Right ventricle myocardium superior (tissue), 1 donor: ENCODE measurements at regions of chr9 and their contacts with region 1.

Region 1: GRCh38 chr9:121992571-121993212 is 100.4 kb downstream of the TTLL11 start:
- DNase-seq: peak; percentile 71
- ATAC-seq: peak; percentile 85

Region 2: DNA sequence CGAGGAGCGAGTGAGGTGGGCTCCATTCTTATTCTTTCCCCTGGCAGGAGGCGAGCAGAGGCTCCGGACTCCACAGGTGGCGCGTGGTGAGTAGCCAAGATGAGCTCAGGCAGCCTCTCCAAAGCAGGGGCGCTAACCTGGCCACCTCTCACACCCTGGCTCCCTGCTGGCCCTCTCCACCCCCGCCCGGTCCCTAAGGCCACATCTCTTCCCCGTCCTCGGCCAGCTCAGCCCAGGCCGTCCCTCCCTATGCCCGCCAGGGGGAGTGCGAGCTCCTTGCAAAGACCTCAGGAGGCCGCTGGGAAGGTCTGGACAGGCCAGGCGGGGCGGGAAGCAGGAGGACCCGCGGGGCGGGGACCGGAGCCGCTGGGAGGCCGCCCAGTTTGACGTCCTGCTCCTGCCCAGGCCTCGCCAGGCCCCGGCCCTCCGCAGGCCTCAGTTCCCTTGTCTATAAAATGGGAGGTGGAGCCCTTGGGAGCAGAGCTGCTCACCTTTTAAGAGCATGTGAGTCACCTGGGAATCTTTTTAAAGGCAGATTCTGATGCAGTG is 446.7 kb before region 1 on chr9:
- intact Hi-C with region 1: loop called (anchors 5 kb)
- DNase-seq: peak; percentile 98
- ATAC-seq: peak; percentile 87

Region 3: GRCh38 chr9:121634329-121635261 is 358.1 kb before region 1 on chr9:
- intact Hi-C with region 1: loop called (anchors 5 kb)
- DNase-seq: no peak
- ATAC-seq: peak; percentile 64

Region 4: GRCh38 chr9:121692606-121693387 is 299.9 kb before region 1 on chr9:
- intact Hi-C with region 1: loop called (anchors 5 kb)
- DNase-seq: no peak
- ATAC-seq: peak; percentile 58

Region 5: GRCh38 chr9:121750715-121751623 is 241.7 kb before region 1 on chr9:
- intact Hi-C with region 1: loop called (anchors 10 kb)
- DNase-seq: no peak
- ATAC-seq: no peak

Region 6: DNA sequence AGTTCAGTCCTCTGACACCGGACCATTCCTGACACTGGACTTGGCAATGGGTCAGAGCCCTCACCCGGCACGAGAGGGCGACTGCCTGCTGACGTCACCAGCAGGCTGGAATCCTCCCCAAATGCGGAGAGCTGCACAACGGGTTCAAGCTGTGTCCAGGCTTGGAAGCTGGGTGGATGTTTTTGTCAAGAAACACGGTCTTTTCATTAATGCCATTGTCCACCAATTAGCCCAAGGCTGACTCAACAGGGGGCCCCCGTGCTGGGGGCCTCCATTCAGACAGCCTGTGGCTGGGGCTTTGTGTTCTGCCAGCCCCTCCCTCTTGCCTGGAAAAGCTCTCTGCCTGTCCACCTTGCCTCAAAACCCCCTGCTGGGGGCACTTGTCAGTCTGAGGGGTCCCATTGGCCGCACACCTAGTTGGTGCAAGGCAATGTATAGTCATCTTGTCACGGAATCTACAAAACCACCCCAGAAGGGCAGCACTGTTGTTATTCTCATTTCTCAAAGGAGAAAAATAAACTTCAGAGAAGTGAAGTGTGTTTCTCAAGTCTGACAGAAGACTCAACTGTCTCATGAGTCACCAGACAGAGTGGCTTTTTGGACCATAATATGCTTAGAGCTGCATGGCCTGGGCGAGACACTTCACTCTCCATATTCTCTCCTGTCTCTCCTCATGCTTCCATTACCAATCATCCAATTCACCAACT is 142.3 kb after region 1 on chr9:
- intact Hi-C with region 1: no loop called
- DNase-seq: no peak
- ATAC-seq: no peak